ENCODE measurements at regions of chr16 and their contacts with region 1.

Region 1: DNA sequence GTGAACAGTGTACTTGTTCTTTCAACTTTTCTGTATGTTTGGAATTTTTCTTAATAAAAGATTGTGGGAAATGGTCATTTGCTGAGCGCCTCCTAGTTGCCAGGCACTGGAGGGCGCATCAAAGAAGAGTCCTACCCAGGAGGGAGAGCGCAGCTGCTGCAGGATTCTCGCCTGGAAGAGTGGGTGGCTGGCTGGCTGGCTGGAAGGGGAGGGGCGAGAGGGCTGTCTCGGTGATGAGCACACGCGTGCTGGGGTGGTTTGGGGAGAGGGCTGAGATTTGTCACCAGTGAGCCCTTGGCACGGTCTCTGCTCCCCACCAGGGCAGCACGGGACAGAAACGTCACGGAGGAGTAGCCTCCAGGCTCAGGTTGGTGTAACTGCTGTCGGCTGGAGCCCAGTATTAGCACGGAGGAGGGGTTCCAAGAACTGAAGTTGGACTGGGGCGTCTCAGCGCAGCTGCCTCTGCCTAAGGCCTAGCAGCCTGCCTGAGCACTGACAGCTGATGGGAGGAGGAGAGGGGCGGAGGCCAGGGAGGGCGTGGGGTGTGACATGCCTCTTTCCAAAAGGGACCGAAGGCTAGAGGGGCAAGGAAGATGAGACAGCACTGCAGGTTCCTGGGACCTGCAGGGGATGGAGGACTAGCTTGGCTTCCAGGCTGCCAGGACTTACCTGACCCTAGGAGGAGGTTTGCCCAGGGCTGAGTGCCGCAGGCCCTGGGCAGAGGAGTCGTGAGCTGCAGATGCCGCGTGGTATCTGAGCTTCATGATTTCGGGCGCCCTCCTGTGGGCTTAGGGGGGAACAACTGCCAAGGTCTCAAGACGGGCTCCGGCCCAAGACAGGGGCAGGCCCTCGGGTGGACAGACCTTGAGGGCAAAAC is 5.7 kb downstream of the LDHD start:
- DNase-seq: peak; percentile 65 to 88 (median 81)
- ATAC-seq: peak; percentile 86
- H3K4me3 ChIP-seq: no peak overlapping the region
- H3K4me3 Mint-ChIP-seq: peak overlapping the region; percentile 32
- H3K27ac ChIP-seq: no peak overlapping the region
- H3K27ac Mint-ChIP-seq: no peak overlapping the region
- H3K4me1 ChIP-seq: peaks cover 25% of the 10 kb centered on the region
- H3K4me1 Mint-ChIP-seq: peaks cover 33% of the 10 kb centered on the region
- H3K27me3 ChIP-seq: peaks cover 0 to 6% of the 10 kb centered on the region in 2 experiments
- H3K27me3 Mint-ChIP-seq: peaks cover 9% of the 10 kb centered on the region
- CTCF ChIP-seq: peak; percentile 83

Region 2: DNA sequence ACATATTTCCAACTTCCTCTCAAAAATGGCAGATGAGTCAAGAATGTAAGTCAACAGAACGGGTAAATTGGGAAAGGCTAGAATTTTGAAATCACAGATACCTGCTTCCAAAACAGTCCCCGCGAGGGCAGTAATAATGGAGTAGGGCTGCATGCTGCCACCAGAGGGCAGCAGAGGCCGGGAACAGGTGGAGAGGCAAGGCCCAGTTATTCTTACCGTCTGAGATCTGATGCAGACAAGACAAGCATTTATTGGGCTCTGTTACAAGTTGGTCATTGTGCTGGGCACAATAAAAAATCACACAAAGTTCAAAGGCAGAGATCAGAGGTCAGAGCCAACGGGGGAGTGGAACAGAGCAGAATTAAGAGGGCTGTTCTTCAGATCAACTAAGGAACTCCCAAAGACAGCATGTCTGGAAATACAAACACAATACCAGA is 401.4 kb before region 1 on chr16:
- CTCF ChIA-PET with region 1: interaction called, 5 read pairs
- POLR2A ChIA-PET with region 1: no interaction called
- intact Hi-C with region 1: loop called in 1 of 2 experiments (anchors 1 kb)
- DNase-seq: peak; percentile 63 to 89 (median 83)
- ATAC-seq: peak; percentile 100
- H3K4me3 ChIP-seq: no peak overlapping the region
- H3K4me3 Mint-ChIP-seq: no peak overlapping the region
- H3K27ac ChIP-seq: no peak overlapping the region
- H3K27ac Mint-ChIP-seq: no peak overlapping the region
- H3K4me1 ChIP-seq: no peaks in the 10 kb centered on the region
- H3K4me1 Mint-ChIP-seq: peaks cover 2% of the 10 kb centered on the region
- H3K27me3 ChIP-seq: no peaks in the 10 kb centered on the region
- H3K27me3 Mint-ChIP-seq: no peaks in the 10 kb centered on the region
- CTCF ChIP-seq: peak; percentile 97

Region 3: GRCh38 chr16:74998481-74999218 is 112.2 kb before region 1 on chr16 and contains the start of gene ZNRF1:
- CTCF ChIA-PET with region 1: interaction called, 161 read pairs
- POLR2A ChIA-PET with region 1: interaction called, 16 read pairs
- intact Hi-C with region 1: loop called (anchors 1 kb)
- DNase-seq: peak; percentile 61 to 89 (median 79)
- ATAC-seq: peak; percentile 82
- H3K4me3 ChIP-seq: peak within 1 kb of the TSS; percentile 58 to 79
- H3K4me3 Mint-ChIP-seq: peak within 1 kb of the TSS; percentile 90
- H3K27ac ChIP-seq: peak within 1 kb of the TSS in 1 of 2 experiments; percentile 37
- H3K27ac Mint-ChIP-seq: peak within 1 kb of the TSS; percentile 85
- H3K4me1 ChIP-seq: peaks cover 20% of the 10 kb centered on the region
- H3K4me1 Mint-ChIP-seq: peaks cover 15% of the 10 kb centered on the region
- H3K27me3 ChIP-seq: peaks cover 0 to 7% of the 10 kb centered on the region in 2 experiments
- H3K27me3 Mint-ChIP-seq: no peaks in the 10 kb centered on the region
- CTCF ChIP-seq: peak; percentile 60
- total RNA-seq, gene ZNRF1: 1.7 to 2.0 TPM

Region 4: GRCh38 chr16:75064403-75065148 is 46.3 kb before region 1 on chr16:
- CTCF ChIA-PET with region 1: interaction called, 38 read pairs
- POLR2A ChIA-PET with region 1: interaction called, 5 read pairs
- intact Hi-C with region 1: no loop called
- DNase-seq: peak in 5 of 9 experiments; percentile 15 to 56 (median 27)
- ATAC-seq: peak; percentile 32
- H3K4me3 ChIP-seq: peak overlapping the region; percentile 26 to 27
- H3K4me3 Mint-ChIP-seq: peak overlapping the region; percentile 76
- H3K27ac ChIP-seq: peak overlapping the region in 1 of 2 experiments; percentile 30
- H3K27ac Mint-ChIP-seq: peak overlapping the region; percentile 90
- H3K4me1 ChIP-seq: peaks cover 26% of the 10 kb centered on the region
- H3K4me1 Mint-ChIP-seq: peaks cover 42% of the 10 kb centered on the region
- H3K27me3 ChIP-seq: peaks cover 0 to 2% of the 10 kb centered on the region in 2 experiments
- H3K27me3 Mint-ChIP-seq: no peaks in the 10 kb centered on the region
- CTCF ChIP-seq: no peak

Region 5: GRCh38 chr16:75099756-75100602 is 10.9 kb before region 1 on chr16:
- CTCF ChIA-PET with region 1: interaction called, 46 read pairs
- POLR2A ChIA-PET with region 1: interaction called, 6 read pairs
- intact Hi-C with region 1: loop called in 1 of 2 experiments (anchors 1 kb)
- DNase-seq: peak in 6 of 9 experiments; percentile 27 to 63 (median 46)
- ATAC-seq: peak; percentile 16
- H3K4me3 ChIP-seq: no peak overlapping the region
- H3K4me3 Mint-ChIP-seq: peak overlapping the region; percentile 37
- H3K27ac ChIP-seq: peak overlapping the region in 1 of 2 experiments; percentile 48
- H3K27ac Mint-ChIP-seq: peak overlapping the region; percentile 69
- H3K4me1 ChIP-seq: peaks cover 29% of the 10 kb centered on the region
- H3K4me1 Mint-ChIP-seq: peaks cover 39% of the 10 kb centered on the region
- H3K27me3 ChIP-seq: no peaks in the 10 kb centered on the region
- H3K27me3 Mint-ChIP-seq: no peaks in the 10 kb centered on the region
- CTCF ChIP-seq: no peak

Region 6: GRCh38 chr16:75148311-75149195 is 37.7 kb after region 1 on chr16 and contains the start of gene ZFP1:
- CTCF ChIA-PET with region 1: interaction called, 3 read pairs
- POLR2A ChIA-PET with region 1: no interaction called
- intact Hi-C with region 1: loop called in 1 of 2 experiments (anchors 2 kb)
- DNase-seq: peak; percentile 86 to 98 (median 95)
- ATAC-seq: peak; percentile 89
- H3K4me3 ChIP-seq: peak within 1 kb of the TSS; percentile 85 to 100
- H3K4me3 Mint-ChIP-seq: peak within 1 kb of the TSS; percentile 87
- H3K27ac ChIP-seq: peak within 1 kb of the TSS; percentile 84
- H3K27ac Mint-ChIP-seq: peak within 1 kb of the TSS; percentile 88
- H3K4me1 ChIP-seq: peaks cover 12% of the 10 kb centered on the region
- H3K4me1 Mint-ChIP-seq: peaks cover 16% of the 10 kb centered on the region
- H3K27me3 ChIP-seq: no peaks in the 10 kb centered on the region
- H3K27me3 Mint-ChIP-seq: no peaks in the 10 kb centered on the region
- CTCF ChIP-seq: no peak
- total RNA-seq, gene ZFP1: 11.9 to 12.9 TPM

Region 7: DNA sequence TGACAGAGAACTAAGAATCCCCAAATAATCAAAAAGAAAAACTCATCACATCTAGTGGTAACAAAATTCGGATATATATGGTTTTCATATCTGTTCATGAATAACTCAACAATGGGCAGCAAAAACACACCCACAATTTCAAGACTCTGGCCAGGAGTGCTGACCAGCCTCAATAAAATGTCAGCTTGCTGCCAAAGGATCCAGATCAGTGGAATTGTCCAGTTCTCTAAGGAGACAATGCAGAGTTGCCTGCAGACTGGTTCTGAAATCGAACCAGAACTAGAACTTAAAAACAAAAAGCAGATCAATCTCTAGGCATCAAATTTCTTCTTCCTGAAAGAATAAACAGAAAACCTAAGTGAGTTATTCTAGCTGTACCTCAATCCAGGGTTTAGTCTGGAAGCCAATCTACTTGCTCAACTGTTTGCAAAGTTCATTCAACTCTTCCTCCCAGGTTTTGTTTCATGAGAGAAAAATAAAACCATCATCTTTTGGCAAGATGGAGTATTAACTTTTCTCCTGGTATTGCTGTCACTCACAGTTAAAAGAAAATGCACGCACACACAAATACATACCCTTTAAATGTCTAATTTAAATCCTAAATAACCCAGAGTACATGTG is 261.5 kb after region 1 on chr16:
- CTCF ChIA-PET with region 1: no interaction called
- POLR2A ChIA-PET with region 1: no interaction called
- intact Hi-C with region 1: no loop called
- DNase-seq: no peak
- ATAC-seq: no peak
- H3K4me3 ChIP-seq: no peak overlapping the region
- H3K4me3 Mint-ChIP-seq: no peak overlapping the region
- H3K27ac ChIP-seq: no peak overlapping the region
- H3K27ac Mint-ChIP-seq: no peak overlapping the region
- H3K4me1 ChIP-seq: no peaks in the 10 kb centered on the region
- H3K4me1 Mint-ChIP-seq: no peaks in the 10 kb centered on the region
- H3K27me3 ChIP-seq: no peaks in the 10 kb centered on the region
- H3K27me3 Mint-ChIP-seq: no peaks in the 10 kb centered on the region
- CTCF ChIP-seq: no peak

Region 8: GRCh38 chr16:75919664-75920063 is 808.8 kb after region 1 on chr16:
- CTCF ChIA-PET with region 1: no interaction called
- POLR2A ChIA-PET with region 1: no interaction called
- intact Hi-C with region 1: no loop called
- DNase-seq: no peak
- ATAC-seq: no peak
- H3K4me3 ChIP-seq: no peak overlapping the region
- H3K4me3 Mint-ChIP-seq: no peak overlapping the region
- H3K27ac ChIP-seq: no peak overlapping the region
- H3K27ac Mint-ChIP-seq: no peak overlapping the region
- H3K4me1 ChIP-seq: no peaks in the 10 kb centered on the region
- H3K4me1 Mint-ChIP-seq: no peaks in the 10 kb centered on the region
- H3K27me3 ChIP-seq: no peaks in the 10 kb centered on the region
- H3K27me3 Mint-ChIP-seq: no peaks in the 10 kb centered on the region
- CTCF ChIP-seq: no peak